Activated naive CD4-positive, alpha-beta T cell treated with anti-CD3 and anti-CD28 coated beads for 36 hours (primary cell): ENCODE measurements at regions of chr5 and their contacts with region 1.

Region 1: DNA sequence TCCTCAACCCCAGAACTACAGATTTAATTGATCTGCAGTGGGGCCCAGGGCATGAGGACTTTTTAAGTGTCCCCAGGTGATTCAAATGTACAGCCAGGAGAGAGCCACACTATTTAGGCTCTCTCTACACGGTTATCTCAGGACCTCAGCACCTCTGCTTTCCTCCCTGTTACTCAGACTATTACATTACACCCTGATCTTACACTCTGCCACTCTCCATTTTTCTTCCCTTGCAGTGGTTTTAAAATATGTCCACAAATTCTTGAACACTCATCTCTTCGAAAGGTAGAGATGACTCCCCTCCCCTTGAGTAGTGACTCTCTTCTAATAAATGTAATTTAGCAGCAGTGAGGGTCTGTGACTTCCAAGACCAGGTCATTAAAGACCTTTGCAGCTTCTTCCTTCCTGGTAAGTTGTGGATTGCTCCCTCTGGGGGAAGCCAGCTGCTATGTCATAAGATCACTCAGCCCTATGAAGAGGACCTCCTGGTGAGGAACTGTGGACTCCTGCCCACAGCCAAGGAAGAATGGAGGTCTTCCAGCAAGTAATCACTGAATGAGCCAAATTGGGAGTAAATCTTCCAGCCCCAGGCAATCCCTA is 87.5 kb upstream of the SSBP2 start:
- DNase-seq: peak; percentile 46
- H3K4me3 Mint-ChIP-seq: no peak overlapping the region
- H3K27ac Mint-ChIP-seq: no peak overlapping the region
- H3K4me1 Mint-ChIP-seq: peaks cover 9% of the 10 kb centered on the region
- H3K27me3 Mint-ChIP-seq: no peaks in the 10 kb centered on the region

Region 2: GRCh38 chr5:81425569-81425968 is 412.8 kb before region 1 on chr5:
- CTCF ChIA-PET with region 1: interaction called, 8 read pairs
- intact Hi-C with region 1: loop called (anchors 1 kb)
- DNase-seq: peak; percentile 7
- H3K4me3 Mint-ChIP-seq: no peak overlapping the region
- H3K27ac Mint-ChIP-seq: peak overlapping the region; percentile 8
- H3K4me1 Mint-ChIP-seq: peaks cover 16% of the 10 kb centered on the region
- H3K27me3 Mint-ChIP-seq: no peaks in the 10 kb centered on the region

Region 3: GRCh38 chr5:81506900-81507588 is 331.4 kb before region 1 on chr5:
- CTCF ChIA-PET with region 1: interaction called, 7 read pairs
- intact Hi-C with region 1: loop called (anchors 1 kb)
- DNase-seq: peak; percentile 62
- H3K4me3 Mint-ChIP-seq: no peak overlapping the region
- H3K27ac Mint-ChIP-seq: no peak overlapping the region
- H3K4me1 Mint-ChIP-seq: no peaks in the 10 kb centered on the region
- H3K27me3 Mint-ChIP-seq: no peaks in the 10 kb centered on the region

Region 4: GRCh38 chr5:81513982-81514381 is 324.4 kb before region 1 on chr5:
- CTCF ChIA-PET with region 1: interaction called, 7 read pairs
- intact Hi-C with region 1: loop called (anchors 1 kb)
- DNase-seq: no peak
- H3K4me3 Mint-ChIP-seq: no peak overlapping the region
- H3K27ac Mint-ChIP-seq: no peak overlapping the region
- H3K4me1 Mint-ChIP-seq: no peaks in the 10 kb centered on the region
- H3K27me3 Mint-ChIP-seq: no peaks in the 10 kb centered on the region

Region 5: DNA sequence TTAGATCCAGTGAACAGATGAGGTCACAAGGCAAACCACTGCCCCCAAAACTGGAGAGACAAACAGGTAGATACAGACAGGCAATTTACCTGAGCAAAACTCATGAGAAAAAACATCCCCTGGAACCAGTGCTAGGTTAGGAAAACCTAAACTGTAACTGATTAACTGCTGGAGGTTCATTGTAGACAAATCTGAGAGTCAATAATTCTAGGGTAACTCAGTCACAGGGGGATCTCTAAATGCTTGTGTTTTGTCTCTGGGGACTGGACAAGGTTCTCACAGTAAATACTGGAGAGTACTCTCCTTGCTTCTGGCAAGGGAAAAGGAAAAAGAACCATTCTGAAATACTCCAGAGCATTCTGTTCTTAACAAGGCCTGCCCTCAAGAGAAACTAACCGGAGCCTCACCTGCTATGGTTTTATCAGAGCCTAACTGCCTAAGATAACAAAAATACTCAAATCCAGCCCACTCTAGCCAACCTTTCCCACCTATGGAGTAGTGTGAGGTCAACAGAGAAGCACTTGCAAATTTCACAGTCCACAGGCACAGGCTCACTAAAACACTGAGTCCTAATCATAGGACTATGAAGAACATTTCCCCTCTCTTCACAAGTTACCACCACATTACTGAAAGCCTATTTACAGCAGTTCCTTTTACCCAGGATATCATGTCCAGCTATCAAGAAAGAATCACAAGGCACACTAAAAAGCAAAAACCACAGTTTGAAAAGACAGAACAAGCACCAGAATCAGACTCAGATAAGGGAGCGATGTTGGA is 304.6 kb before region 1 on chr5:
- CTCF ChIA-PET with region 1: no interaction called
- intact Hi-C with region 1: loop called (anchors 1 kb)
- DNase-seq: no peak
- H3K4me3 Mint-ChIP-seq: no peak overlapping the region
- H3K27ac Mint-ChIP-seq: no peak overlapping the region
- H3K4me1 Mint-ChIP-seq: peaks cover 46% of the 10 kb centered on the region
- H3K27me3 Mint-ChIP-seq: no peaks in the 10 kb centered on the region

Region 6: GRCh38 chr5:81787474-81788242 is 50.7 kb before region 1 on chr5:
- CTCF ChIA-PET with region 1: no interaction called
- intact Hi-C with region 1: loop called (anchors 5 kb)
- DNase-seq: no peak
- H3K4me3 Mint-ChIP-seq: no peak overlapping the region
- H3K27ac Mint-ChIP-seq: no peak overlapping the region
- H3K4me1 Mint-ChIP-seq: peaks cover 10% of the 10 kb centered on the region
- H3K27me3 Mint-ChIP-seq: no peaks in the 10 kb centered on the region

Region 7: GRCh38 chr5:82225525-82226172 is 387.2 kb after region 1 on chr5:
- CTCF ChIA-PET with region 1: no interaction called
- intact Hi-C with region 1: loop called (anchors 1 kb)
- DNase-seq: peak; percentile 79
- H3K4me3 Mint-ChIP-seq: no peak overlapping the region
- H3K27ac Mint-ChIP-seq: no peak overlapping the region
- H3K4me1 Mint-ChIP-seq: peaks cover 3% of the 10 kb centered on the region
- H3K27me3 Mint-ChIP-seq: no peaks in the 10 kb centered on the region